A549 (cell line): ENCODE measurements at regions of chr6 and their contacts with region 1.

Region 1: GRCh38 chr6:105363100-105363754 is 39.7 kb downstream of the PREP start:
- DNase-seq: no peak
- ATAC-seq: peak in 1 of 2 experiments; percentile 26; a peak in 1 of 6 replicates
- H3K4me3 ChIP-seq: no peak overlapping the region
- H3K27ac ChIP-seq: no peak overlapping the region
- H3K4me1 ChIP-seq: peaks cover 18% of the 10 kb centered on the region
- CTCF ChIP-seq: peak; percentile 54
- EP300 ChIP-seq: no peak
- POLR2A ChIP-seq: no peak
- RAD21 ChIP-seq: peak; percentile 40 to 50; a peak in 4 of 5 replicates

Region 2: DNA sequence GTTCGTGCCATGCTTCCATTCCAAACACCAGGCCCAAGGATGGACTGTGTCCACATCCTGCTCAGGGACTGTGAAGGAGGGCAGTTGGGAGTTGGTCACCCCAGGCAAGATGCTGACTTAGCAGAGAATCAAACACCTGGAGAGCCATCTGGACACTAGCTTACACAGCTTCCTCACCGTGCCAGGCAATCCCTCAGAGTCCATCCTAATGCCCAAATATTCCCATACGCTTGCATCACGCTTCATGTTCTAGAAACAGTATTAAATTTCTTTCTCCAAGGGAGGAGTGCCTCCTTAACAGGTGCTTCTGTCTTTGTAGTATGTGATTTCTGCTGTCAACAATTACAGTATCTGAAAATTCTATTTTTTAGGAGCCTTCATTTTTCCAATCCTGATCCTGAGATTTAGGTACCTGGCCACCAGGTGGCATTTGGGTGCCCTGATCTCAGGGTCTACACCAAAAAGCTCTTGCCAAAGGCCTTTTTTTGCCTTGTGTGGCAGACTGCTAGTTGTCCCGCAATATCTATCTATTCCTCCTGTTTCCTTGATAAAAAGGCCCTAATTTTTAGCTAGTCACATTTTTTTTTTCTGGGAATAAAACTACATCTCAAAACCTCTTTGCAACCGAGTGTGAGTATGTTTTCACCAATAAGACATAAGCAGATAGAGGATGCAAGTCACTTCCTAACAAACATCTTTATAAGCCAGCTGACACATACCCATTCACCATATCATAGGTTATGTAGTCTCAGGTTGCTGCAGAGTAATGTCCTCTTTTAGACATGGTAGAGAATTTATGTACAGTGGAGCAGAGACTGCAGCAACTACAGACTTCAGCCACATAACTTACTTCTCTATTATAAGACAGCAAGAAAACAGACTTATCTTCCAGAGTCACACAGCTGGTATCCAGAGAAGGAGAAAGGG is 45.4 kb before region 1 on chr6:
- CTCF ChIA-PET with region 1: interaction called, 19 read pairs
- POLR2A ChIA-PET with region 1: no interaction called
- DNase-seq: no peak
- ATAC-seq: peak in 1 of 2 experiments; percentile 53; a peak in 2 of 6 replicates
- H3K4me3 ChIP-seq: no peak overlapping the region
- H3K27ac ChIP-seq: no peak overlapping the region
- H3K4me1 ChIP-seq: peaks cover 16% of the 10 kb centered on the region; the same call in 2 of the 3 replicates
- CTCF ChIP-seq: peak; percentile 43
- EP300 ChIP-seq: no peak
- POLR2A ChIP-seq: no peak
- RAD21 ChIP-seq: peak; percentile 26 to 30; a peak in 1 of 5 replicates